ENCODE measurements at regions of chr2 and their contacts with region 1.

Region 1: DNA sequence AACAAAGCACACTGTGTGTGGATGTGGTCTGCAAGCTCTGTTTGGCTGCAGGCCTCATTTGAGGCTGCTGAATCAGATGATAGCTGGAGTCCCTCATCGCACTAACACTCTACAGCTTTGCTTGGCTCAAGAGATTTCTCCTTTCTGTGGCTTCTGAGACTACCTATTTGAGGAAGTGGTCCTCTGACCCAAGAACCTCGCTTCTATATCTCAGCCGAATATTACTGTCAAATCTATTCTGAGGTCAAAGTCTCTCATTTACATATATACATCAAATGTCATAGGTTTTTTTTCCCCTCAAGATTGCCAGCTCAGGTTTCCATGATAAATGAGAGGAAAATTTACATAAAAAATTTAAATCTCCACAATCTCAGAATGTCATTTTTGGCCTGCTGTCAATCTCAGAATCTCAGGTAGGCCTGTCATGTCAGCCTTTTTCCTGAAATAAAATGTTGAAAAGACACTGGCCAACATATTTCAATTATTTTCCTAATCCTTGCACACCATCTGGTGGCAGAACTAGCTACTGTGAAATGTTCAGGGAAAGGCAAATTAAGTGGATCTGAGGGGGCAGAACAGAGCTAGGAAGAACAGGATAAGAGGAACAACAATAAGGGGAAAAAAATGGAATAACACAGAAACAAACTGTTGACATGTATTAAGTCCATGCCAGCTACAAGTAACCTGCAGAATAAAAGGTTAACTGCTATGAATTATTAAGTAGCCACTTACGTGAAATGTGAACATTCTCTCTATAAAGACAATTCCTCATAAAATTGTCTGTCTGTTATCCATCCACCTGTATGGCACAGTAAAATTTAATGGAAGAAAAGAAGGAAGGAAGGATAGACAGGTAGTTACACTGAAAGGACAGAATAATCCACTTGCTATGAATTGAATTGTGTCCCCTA is 39.3 kb downstream of the AP1S3 start:
- DNase-seq: no peak
- H3K4me3 ChIP-seq: no peak overlapping the region
- H3K27ac ChIP-seq: no peak overlapping the region
- H3K27me3 ChIP-seq: no peaks in the 10 kb centered on the region
- CTCF ChIP-seq: peak; percentile 78

Region 2: DNA sequence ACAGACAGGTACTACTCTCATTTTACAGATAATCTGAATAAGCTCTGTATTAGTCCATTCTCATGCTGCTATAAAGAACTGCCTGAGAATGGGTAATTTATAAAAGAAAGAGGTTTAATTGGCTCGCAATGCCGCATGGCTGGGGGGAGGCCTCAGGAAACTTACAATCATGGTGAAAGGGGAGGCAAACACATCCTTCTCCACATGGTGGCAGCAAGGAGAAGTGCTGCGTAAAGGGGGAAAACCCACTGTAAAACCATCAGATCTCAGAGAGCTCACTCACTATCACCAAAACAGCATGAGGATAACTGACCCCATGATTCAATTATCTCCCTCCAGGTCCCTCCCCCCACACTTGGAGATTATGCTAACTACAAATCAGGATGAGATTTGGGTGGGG is 491.7 kb before region 1 on chr2:
- CTCF ChIA-PET with region 1: interaction called, 17 read pairs
- POLR2A ChIA-PET with region 1: no interaction called
- DNase-seq: peak; percentile 1
- H3K4me3 ChIP-seq: no peak overlapping the region
- H3K27ac ChIP-seq: no peak overlapping the region
- H3K27me3 ChIP-seq: no peaks in the 10 kb centered on the region
- CTCF ChIP-seq: peak; percentile 73

Region 3: DNA sequence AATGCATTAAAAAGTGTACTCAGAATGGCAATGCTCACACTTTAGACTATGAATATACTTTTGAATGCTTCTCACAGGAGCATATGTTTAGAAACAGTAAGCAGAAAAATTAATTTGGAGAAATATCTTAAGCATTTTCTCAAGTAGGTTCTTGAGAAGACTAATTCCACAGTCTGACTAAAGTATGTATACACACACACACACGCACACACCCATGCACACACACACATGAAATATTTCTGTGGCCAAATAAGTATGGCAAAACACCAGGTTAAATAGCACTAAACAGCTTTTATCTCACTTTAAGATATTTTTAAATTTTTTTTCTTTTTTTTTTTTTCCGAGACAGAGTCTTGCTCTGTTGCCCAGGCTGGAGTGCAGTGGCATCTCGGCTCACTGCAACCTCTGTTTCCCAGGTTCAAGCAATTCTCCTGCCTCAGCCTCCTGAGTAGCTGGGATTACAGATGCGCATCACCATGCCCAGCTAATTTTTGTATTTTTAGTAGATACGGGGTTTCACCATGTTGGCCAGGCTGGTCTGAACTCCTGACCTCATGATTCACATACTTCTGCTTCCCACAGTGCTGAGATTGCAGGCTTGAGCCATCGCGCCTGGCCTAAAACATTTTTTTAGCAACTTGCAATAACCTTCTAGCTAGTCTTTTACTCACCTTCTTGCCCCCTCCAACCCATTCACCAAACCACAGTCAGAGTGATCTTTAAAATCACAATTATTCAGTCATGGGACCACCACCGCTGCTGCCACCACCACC is 128.4 kb before region 1 on chr2:
- CTCF ChIA-PET with region 1: interaction called, 65 read pairs
- POLR2A ChIA-PET with region 1: no interaction called
- DNase-seq: no peak
- H3K4me3 ChIP-seq: no peak overlapping the region
- H3K27ac ChIP-seq: no peak overlapping the region
- H3K27me3 ChIP-seq: no peaks in the 10 kb centered on the region
- CTCF ChIP-seq: no peak

Region 4: DNA sequence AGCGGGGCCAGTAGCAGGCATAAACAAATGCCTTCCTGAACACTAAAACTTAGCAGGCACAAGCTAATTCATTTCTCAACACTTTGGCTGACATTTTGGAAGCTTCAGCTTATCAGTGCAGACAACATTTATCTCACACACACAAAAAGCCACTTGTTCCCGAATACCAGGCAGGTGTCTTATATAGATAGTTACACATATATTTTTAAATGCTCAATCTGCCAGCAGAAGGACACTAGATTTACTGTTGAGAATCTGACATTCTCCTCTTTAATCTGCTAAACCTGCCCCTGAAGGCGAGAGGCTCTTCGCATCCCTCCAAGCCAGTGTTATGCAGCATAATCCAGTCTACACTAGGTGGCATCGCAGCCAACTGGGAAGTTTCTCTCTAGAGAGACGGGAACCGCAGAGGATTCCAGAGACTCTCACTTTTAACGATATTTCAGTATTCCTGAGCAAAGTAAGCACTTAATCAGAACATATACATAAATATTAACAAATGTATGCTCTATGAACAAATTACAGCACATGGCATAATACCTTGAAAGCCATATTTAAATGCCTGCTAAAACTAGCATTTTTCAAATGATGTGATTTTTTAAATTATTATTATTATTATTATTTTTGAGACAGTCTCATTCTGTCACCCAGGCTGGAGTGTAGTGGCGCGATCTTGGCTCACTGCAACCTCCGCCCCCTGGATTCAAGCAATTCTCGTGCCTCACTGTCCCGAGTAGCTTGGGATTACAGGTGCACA is 105.7 kb before region 1 on chr2:
- CTCF ChIA-PET with region 1: interaction called, 48 read pairs
- POLR2A ChIA-PET with region 1: no interaction called
- DNase-seq: no peak
- H3K4me3 ChIP-seq: no peak overlapping the region
- H3K27ac ChIP-seq: no peak overlapping the region
- H3K27me3 ChIP-seq: no peaks in the 10 kb centered on the region
- CTCF ChIP-seq: peak; percentile 83

Region 5: DNA sequence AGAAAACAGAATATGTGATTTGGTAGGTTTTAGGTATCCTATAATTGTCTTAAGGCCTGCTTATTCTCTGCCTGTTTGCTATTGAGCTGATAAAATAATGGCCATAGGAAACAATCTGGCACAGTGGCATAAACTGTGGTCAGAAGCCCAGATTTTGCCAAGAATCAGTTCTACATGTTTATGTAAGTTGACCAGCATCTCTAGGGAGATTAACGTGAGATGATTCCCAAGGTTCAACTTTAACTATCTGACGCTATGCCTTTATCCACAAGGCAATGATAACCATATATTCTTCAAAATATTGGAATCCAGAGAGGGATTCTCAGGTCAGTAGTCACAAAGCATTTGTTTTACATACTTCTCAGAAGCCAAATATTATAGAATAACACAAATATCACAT is 13.7 kb after region 1 on chr2:
- CTCF ChIA-PET with region 1: interaction called, 13 read pairs
- POLR2A ChIA-PET with region 1: no interaction called
- DNase-seq: no peak
- H3K4me3 ChIP-seq: no peak overlapping the region
- H3K27ac ChIP-seq: no peak overlapping the region
- H3K27me3 ChIP-seq: peaks cover 3% of the 10 kb centered on the region
- CTCF ChIP-seq: no peak

Region 6: GRCh38 chr2:223860809-223861738 is 63.0 kb after region 1 on chr2:
- CTCF ChIA-PET with region 1: no interaction called
- POLR2A ChIA-PET with region 1: no interaction called
- DNase-seq: no peak
- H3K4me3 ChIP-seq: no peak overlapping the region
- H3K27ac ChIP-seq: no peak overlapping the region
- H3K27me3 ChIP-seq: no peaks in the 10 kb centered on the region
- CTCF ChIP-seq: no peak

Region 7: GRCh38 chr2:224145751-224146355 is 347.8 kb after region 1 on chr2:
- CTCF ChIA-PET with region 1: no interaction called
- POLR2A ChIA-PET with region 1: no interaction called
- DNase-seq: no peak
- H3K4me3 ChIP-seq: no peak overlapping the region
- H3K27ac ChIP-seq: peak overlapping the region; percentile 35
- H3K27me3 ChIP-seq: no peaks in the 10 kb centered on the region
- CTCF ChIP-seq: no peak